Aorta (tissue), 5 donors: ENCODE measurements at regions of chr13 and their contacts with region 1.

Region 1: GRCh38 chr13:48412881-48413351 is at the start of gene LPAR6:
- DNase-seq: no peak
- ATAC-seq: peak; percentile 87
- H3K4me3 ChIP-seq: peak within 1 kb of the TSS; percentile 94 to 98
- H3K27ac ChIP-seq: peak within 1 kb of the TSS; percentile 43 to 44
- H3K4me1 ChIP-seq: peaks cover 0 to 1% of the 10 kb centered on the region in 2 donors
- H3K27me3 ChIP-seq: no peaks in the 10 kb centered on the region
- total RNA-seq, gene LPAR6: 32.4 to 79.1 TPM

Region 2: GRCh38 chr13:48078251-48078656 is 334.7 kb before region 1 on chr13:
- intact Hi-C with region 1: no loop called
- DNase-seq: no peak
- ATAC-seq: no peak
- H3K4me3 ChIP-seq: no peak overlapping the region
- H3K27ac ChIP-seq: no peak overlapping the region
- H3K4me1 ChIP-seq: no peaks in the 10 kb centered on the region
- H3K27me3 ChIP-seq: no peaks in the 10 kb centered on the region

Region 3: DNA sequence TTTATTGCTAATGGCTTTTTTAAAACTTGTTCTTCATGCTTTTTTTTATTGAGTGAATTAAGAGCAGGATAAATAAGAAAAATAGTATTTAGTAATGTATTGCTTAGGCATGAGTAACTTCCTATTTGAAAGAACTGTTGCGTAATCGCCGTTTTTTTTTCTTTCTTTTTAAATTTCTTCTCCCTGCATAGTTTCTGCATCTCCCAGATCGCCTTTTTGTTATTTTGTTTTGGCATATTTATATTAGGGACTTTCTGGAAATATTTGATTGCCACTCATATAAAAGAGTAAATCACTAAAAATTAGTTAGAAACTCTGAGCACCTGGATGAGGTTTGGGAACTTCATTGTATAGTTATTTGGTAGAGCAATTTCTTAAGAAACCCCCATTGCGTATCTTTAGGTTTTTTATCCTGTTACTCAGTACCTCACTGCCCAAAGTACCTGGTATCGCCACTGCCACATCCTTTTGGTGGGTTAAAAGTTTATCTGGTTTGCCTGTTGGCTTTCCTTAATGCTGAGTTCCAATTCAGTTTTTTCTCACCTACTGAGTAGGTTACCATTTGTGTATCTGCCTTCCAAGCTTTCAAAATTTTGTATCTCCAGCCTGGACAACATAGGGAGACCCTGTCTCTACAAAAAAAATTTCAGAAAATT is 36.2 kb after region 1 on chr13:
- intact Hi-C with region 1: loop called (anchors 5 kb)
- DNase-seq: no peak
- ATAC-seq: no peak
- H3K4me3 ChIP-seq: no peak overlapping the region
- H3K27ac ChIP-seq: no peak overlapping the region
- H3K4me1 ChIP-seq: peaks cover 0 to 2% of the 10 kb centered on the region in 2 donors
- H3K27me3 ChIP-seq: no peaks in the 10 kb centered on the region

Region 4: GRCh38 chr13:48505597-48506091 is 92.7 kb after region 1 on chr13:
- intact Hi-C with region 1: no loop called
- DNase-seq: peak in 1 of 2 donors; percentile 75
- ATAC-seq: peak; percentile 77
- H3K4me3 ChIP-seq: peak overlapping the region in 1 of 2 donors; percentile 4
- H3K27ac ChIP-seq: peak overlapping the region; percentile 75 to 87
- H3K4me1 ChIP-seq: no peaks in the 10 kb centered on the region
- H3K27me3 ChIP-seq: no peaks in the 10 kb centered on the region